ENCODE measurements at regions of chr12 and their contacts with region 1.

Region 1: GRCh38 chr12:70590051-70590450 is 47.2 kb downstream of the PTPRB start:
- DNase-seq: no peak

Region 2: DNA sequence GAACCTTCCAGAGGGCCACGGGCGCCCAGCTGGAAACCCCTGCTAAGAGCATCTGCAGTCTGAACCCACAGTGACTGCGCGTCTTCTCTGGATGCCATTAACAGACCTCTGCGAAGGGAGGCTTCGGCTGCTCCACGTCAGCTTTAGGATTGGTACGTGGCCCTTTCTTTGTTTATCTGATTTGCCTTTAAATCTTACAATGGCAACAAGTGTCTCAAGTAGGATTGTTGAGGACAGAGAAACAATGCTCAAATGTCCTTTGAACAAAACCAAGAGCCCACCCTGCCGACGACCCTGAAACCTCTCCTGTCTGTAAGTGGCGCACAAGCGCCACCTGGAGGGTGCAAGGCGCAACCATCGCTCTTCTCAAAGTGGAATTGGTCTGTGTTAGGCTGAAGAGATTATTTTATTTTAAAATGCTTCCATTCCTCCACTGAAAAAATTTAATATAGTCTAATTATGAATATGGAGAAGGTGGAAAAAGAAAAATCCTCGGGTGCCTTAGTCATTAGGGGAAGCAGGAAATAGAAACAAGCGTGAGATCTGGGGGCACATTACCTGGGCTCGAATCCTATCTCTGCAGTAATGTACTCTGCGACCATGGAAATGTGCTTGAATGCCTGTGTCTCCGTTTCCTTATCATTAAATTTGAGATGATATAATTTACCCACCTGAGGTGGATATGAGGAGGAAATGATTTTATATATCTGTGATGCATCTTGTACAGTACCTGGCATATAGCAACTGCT is 129.8 kb after region 1 on chr12:
- intact Hi-C with region 1: loop called (anchors 2 kb)
- DNase-seq: no peak